ENCODE measurements at regions of chr20 and their contacts with region 1.

Region 1: DNA sequence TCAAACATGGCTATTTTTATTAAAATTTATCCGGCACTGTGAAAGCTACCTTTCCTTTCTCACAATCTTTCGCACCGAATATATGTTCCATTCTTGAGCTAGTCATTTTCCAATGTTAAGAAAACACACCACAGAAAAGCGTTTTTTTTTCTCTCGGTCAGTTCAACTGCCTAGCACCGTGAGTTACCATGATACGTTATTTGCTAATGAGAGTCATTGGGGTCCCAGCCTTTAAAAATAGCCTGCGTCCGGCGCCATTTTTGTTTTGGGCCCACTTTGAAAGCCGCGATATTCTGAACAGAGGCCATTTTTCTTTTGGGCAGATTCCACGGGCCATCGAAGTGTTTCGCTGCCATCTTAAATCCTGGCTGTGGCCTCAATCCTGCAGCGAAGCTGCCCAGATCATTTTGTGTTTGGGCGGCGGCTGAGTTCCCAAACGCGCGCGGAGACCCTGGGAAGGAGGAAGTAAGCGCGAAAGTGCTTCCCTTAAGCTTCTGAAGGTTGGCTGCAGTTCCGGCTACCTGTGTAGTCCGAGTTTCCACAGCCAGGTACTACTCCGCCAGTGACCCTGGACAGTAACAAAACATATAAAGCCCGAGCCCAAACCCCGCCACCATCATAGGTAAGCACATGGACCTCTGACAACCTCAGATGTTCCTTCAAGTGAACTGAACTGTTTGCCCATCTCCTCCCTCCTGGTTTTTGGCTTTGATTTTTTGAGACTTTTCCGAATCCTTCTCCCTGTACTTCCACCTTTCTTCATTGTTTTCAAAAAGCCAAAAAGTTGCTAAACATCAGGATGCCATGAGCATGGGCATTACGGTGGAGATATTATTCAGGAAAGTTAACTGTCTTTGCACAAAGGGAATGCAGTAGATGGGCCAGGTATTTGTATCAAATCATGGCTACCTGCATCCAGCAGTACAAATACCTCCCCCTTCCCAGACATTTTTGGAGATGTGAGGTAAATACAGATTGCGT is at the start of gene SLX4IP:
- DNase-seq: peak; percentile 97
- H3K4me3 Mint-ChIP-seq: peak within 1 kb of the TSS; percentile 86
- H3K27ac Mint-ChIP-seq: peak within 1 kb of the TSS; percentile 94
- H3K4me1 Mint-ChIP-seq: peaks cover 12% of the 10 kb centered on the region
- H3K27me3 Mint-ChIP-seq: no peaks in the 10 kb centered on the region
- CTCF ChIP-seq: no peak
- total RNA-seq, gene SLX4IP: 11.2 and 12.9 TPM in 2 replicates

Region 2: GRCh38 chr20:9989066-9989724 is 445.9 kb before region 1 on chr20:
- CTCF ChIA-PET with region 1: no interaction called
- POLR2A ChIA-PET with region 1: interaction called, 19 read pairs
- intact Hi-C with region 1: no loop called
- DNase-seq: peak; percentile 82
- H3K4me3 Mint-ChIP-seq: peak overlapping the region; percentile 26
- H3K27ac Mint-ChIP-seq: peak overlapping the region; percentile 82
- H3K4me1 Mint-ChIP-seq: peaks cover 26% of the 10 kb centered on the region
- H3K27me3 Mint-ChIP-seq: no peaks in the 10 kb centered on the region
- CTCF ChIP-seq: no peak

Region 3: GRCh38 chr20:10412591-10413408 is 22.3 kb before region 1 on chr20:
- CTCF ChIA-PET with region 1: interaction called, 107 read pairs
- POLR2A ChIA-PET with region 1: interaction called, 86 read pairs
- intact Hi-C with region 1: no loop called
- DNase-seq: no peak
- H3K4me3 Mint-ChIP-seq: no peak overlapping the region
- H3K27ac Mint-ChIP-seq: no peak overlapping the region
- H3K4me1 Mint-ChIP-seq: peaks cover 28% of the 10 kb centered on the region
- H3K27me3 Mint-ChIP-seq: no peaks in the 10 kb centered on the region
- CTCF ChIP-seq: no peak

Region 4: GRCh38 chr20:10504994-10505730 is 70.0 kb after region 1 on chr20:
- CTCF ChIA-PET with region 1: interaction called, 7 read pairs
- POLR2A ChIA-PET with region 1: interaction called, 135 read pairs
- intact Hi-C with region 1: loop called (anchors 2 kb)
- DNase-seq: peak; percentile 74
- H3K4me3 Mint-ChIP-seq: peak overlapping the region; percentile 52
- H3K27ac Mint-ChIP-seq: peak overlapping the region; percentile 89
- H3K4me1 Mint-ChIP-seq: peaks cover 67% of the 10 kb centered on the region
- H3K27me3 Mint-ChIP-seq: no peaks in the 10 kb centered on the region
- CTCF ChIP-seq: no peak

Region 5: DNA sequence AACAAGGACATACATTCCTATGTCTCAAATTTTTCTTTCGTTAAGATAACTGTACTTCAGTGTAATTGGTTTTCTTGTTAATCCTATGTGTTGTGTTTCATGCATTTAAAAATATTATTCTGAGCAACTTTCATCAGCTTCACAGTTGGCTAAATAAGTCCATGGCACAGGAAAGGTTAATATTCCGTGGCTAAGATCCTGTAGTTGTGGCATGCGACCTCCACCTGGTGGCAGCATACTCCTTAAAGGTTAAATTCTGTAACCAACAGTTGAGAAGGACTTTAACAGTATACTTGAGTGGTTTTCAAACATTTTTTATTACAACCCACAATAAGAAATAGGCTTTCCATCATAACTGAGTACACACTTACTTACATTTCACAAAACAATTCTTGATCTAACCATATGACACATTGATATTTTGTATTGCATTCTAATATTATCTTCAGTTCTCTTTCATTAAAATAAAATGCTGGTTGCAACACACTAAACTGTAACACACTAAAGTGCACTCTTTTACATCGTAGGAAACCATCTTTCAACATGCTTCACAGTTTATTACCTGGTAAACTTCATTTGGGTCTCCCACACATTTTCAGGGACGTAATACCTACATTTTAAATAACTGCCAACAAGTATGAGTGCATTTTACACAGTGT is 118.3 kb after region 1 on chr20:
- CTCF ChIA-PET with region 1: interaction called, 4 read pairs
- POLR2A ChIA-PET with region 1: interaction called, 20 read pairs
- intact Hi-C with region 1: no loop called
- DNase-seq: peak; percentile 76
- H3K4me3 Mint-ChIP-seq: no peak overlapping the region
- H3K27ac Mint-ChIP-seq: no peak overlapping the region
- H3K4me1 Mint-ChIP-seq: peaks cover 27% of the 10 kb centered on the region
- H3K27me3 Mint-ChIP-seq: no peaks in the 10 kb centered on the region
- CTCF ChIP-seq: peak; percentile 82

Region 6: GRCh38 chr20:10603971-10604864 is 169.1 kb after region 1 on chr20:
- CTCF ChIA-PET with region 1: no interaction called
- POLR2A ChIA-PET with region 1: interaction called, 23 read pairs
- intact Hi-C with region 1: no loop called
- DNase-seq: peak; percentile 94
- H3K4me3 Mint-ChIP-seq: peak overlapping the region; percentile 47
- H3K27ac Mint-ChIP-seq: peak overlapping the region; percentile 87
- H3K4me1 Mint-ChIP-seq: peaks cover 20% of the 10 kb centered on the region
- H3K27me3 Mint-ChIP-seq: no peaks in the 10 kb centered on the region
- CTCF ChIP-seq: no peak